Activated B cell treated with CpG ODN at 0.5 μM for 24 hours (primary cell): ENCODE measurements at regions of chr11 and their contacts with region 1.

Region 1: GRCh38 chr11:75826461-75827230 is 11.6 kb downstream of the UVRAG start:
- DNase-seq: no peak
- ATAC-seq: no peak
- H3K4me3 Mint-ChIP-seq: peak overlapping the region; percentile 63
- H3K27ac Mint-ChIP-seq: peak overlapping the region; percentile 76
- H3K4me1 Mint-ChIP-seq: peaks cover 87% of the 10 kb centered on the region
- H3K27me3 Mint-ChIP-seq: no peaks in the 10 kb centered on the region
- CTCF ChIP-seq: no peak

Region 2: GRCh38 chr11:75562048-75562835 is 264.4 kb before region 1 on chr11 and contains the start of gene SERPINH1:
- CTCF ChIA-PET with region 1: no interaction called
- POLR2A ChIA-PET with region 1: no interaction called
- intact Hi-C with region 1: no loop called
- DNase-seq: peak; percentile 47
- ATAC-seq: peak; percentile 75
- H3K4me3 Mint-ChIP-seq: peak within 1 kb of the TSS; percentile 93
- H3K27ac Mint-ChIP-seq: peak within 1 kb of the TSS; percentile 76
- H3K4me1 Mint-ChIP-seq: peaks cover 20% of the 10 kb centered on the region
- H3K27me3 Mint-ChIP-seq: peaks cover 2% of the 10 kb centered on the region
- CTCF ChIP-seq: no peak
- total RNA-seq, gene SERPINH1: 4.5 and 5.6 TPM in 2 replicates

Region 3: GRCh38 chr11:75582895-75583717 is 243.5 kb before region 1 on chr11:
- CTCF ChIA-PET with region 1: no interaction called
- POLR2A ChIA-PET with region 1: no interaction called
- intact Hi-C with region 1: no loop called
- DNase-seq: peak; percentile 63
- ATAC-seq: peak; percentile 90
- H3K4me3 Mint-ChIP-seq: peak overlapping the region; percentile 86
- H3K27ac Mint-ChIP-seq: peak overlapping the region; percentile 75
- H3K4me1 Mint-ChIP-seq: peaks cover 23% of the 10 kb centered on the region
- H3K27me3 Mint-ChIP-seq: no peaks in the 10 kb centered on the region
- CTCF ChIP-seq: no peak

Region 4: DNA sequence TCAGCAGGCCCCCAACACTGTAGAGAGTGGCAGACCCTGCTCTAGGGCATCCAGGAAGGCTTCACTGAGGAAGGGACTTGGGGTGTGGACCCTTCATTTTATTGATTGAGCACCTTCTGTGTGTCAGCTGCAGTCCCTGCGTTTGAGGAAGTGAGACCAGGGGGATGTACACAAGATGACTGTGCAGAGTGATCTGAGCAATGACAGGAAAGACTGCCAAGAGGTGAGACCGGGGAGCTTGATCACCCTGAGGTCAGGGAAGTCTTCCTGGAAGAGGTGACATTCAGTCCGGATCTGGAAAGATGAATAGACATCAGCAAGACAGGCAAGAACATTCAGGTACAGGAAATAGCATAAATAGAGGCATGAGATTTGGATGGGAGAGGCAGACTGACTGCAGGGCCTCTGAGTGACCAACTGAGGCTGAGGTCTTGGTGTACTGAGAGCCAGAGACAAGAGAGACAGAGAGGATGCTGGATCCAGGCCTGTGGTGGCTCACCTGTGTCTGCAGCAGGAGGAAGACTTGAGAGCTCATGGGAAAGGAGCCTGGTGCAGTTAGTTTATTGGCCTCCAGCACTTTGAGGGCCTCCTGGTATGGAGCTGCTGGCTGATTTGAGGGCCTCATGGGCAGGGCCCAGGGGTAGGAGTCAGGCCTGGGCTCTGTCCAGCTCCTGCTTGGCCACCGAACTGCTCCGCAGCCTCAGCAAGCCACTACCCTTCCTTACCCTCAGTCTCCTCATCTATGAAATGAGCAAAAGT is 52.9 kb before region 1 on chr11:
- CTCF ChIA-PET with region 1: no interaction called
- POLR2A ChIA-PET with region 1: interaction called, 6 read pairs
- intact Hi-C with region 1: loop called (anchors 2 kb)
- DNase-seq: peak; percentile 42
- ATAC-seq: peak; percentile 80
- H3K4me3 Mint-ChIP-seq: peak overlapping the region; percentile 1
- H3K27ac Mint-ChIP-seq: peak overlapping the region; percentile 76
- H3K4me1 Mint-ChIP-seq: peaks cover 80% of the 10 kb centered on the region
- H3K27me3 Mint-ChIP-seq: no peaks in the 10 kb centered on the region
- CTCF ChIP-seq: no peak